Activated naive CD4-positive, alpha-beta T cell treated with anti-CD3 and anti-CD28 coated beads for 36 hours (primary cell): ENCODE measurements at regions of chr18 and their contacts with region 1.

Region 1: DNA sequence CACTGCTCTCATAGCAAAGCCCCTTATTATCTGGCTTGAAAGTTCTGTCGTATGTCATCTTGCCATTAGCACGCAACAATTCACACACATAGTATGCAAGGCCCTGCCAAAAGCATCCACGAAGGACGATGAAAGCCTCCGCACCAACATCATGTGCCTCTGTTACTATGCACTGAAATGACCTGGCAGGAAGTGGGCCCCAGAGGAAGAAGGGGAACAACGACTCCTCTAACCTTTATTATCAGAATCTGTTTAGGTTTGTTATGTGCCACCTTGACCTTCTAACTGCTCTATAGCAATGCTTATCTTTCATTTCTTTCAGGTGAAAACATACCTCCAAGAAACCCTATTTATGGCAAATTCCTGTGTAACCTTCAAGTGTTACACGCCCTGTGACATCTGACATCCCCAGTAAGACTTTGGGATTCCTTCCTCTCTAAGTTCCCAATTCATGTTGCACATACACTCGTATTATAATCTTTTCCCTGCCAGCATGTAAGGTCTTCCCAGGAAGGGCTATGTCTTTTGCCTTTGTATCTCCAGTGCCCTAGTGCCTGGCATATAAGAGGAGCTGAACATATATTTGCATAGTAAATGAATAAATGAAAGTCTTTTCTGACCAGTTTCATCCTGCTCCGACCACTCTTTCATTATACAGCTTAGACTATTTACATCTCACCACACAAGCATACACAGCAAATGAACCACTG is 7.0 kb upstream of the NDUFV2 start:
- DNase-seq: peak; percentile 88
- H3K4me3 Mint-ChIP-seq: peak overlapping the region; percentile 57
- H3K27ac Mint-ChIP-seq: peak overlapping the region; percentile 96
- H3K4me1 Mint-ChIP-seq: peaks cover 63% of the 10 kb centered on the region
- H3K27me3 Mint-ChIP-seq: no peaks in the 10 kb centered on the region

Region 2: DNA sequence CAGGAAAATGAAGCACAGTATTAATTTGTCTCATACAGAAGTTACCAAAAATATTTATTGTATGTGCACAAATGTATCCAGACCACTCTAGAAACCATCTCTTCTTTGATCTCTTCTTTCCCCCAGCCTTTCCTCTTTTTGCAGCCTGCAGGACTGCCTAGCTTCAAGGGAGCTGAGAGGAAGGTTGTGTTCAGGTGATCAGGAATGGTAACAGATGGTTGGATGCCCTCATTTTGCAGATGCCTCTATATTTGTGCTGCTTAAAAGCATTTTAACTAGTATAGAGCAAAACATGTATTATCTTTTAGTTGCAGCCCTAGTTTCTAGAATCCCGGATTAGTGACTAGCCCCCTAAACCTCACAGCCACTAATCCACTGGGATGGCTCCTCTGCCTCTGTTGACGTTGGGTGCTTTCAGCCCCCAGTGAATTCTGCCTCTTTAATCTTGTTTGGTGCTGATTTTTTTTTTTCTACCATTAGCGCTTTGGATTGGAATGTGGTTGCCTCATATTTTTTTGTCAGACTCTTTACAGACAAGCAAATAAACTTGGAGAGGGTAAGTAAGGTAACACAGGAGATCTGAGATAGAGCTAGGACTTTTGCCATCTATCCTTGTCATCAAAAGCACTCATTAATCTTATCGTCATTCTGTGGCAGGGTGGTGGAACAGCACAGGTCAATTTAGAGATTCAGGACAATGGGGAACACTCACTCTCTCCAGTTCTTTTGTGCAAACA is 96.8 kb before region 1 on chr18:
- CTCF ChIA-PET with region 1: no interaction called
- intact Hi-C with region 1: no loop called
- DNase-seq: no peak
- H3K4me3 Mint-ChIP-seq: no peak overlapping the region
- H3K27ac Mint-ChIP-seq: no peak overlapping the region
- H3K4me1 Mint-ChIP-seq: no peaks in the 10 kb centered on the region
- H3K27me3 Mint-ChIP-seq: peaks cover 16% of the 10 kb centered on the region

Region 3: DNA sequence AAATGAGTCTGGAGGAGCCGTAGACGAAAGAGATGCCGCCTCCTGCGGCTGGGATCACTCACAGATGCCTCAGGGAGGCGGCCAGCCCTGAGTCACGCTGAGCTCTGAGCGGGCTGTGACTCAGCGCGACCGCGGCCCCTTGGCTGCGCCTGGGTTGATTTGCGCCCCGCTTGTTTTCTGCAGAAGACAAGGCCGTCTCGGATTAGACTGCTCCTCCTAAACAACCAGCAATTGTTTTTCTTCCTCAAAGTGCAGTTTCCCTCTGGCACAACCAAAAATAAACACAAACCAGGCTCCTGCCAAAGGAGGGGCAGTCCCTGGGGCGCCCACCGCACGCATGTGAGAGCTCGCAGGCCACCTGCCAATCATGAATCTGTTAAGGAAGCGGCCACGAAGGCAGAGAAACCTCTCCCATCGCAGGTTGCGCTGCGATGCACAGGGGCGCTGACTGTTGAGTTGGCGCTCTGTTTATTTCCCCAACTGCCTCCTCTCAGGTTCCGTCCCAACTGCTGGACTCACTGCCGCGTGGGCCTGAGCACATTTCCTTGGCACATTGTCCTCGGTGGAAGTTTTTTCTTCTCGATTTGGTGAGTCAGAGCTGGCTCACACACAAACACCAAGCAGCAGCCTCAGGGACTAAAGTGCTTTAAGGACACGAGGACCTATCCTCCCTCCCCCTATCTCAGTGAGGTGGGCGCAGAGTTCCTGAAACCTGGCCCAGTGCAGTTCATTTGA is 78.1 kb before region 1 on chr18:
- CTCF ChIA-PET with region 1: no interaction called
- intact Hi-C with region 1: no loop called
- DNase-seq: peak; percentile 84
- H3K4me3 Mint-ChIP-seq: peak overlapping the region; percentile 56
- H3K27ac Mint-ChIP-seq: no peak overlapping the region
- H3K4me1 Mint-ChIP-seq: peaks cover 14% of the 10 kb centered on the region
- H3K27me3 Mint-ChIP-seq: peaks cover 8% of the 10 kb centered on the region

Region 4: GRCh38 chr18:9082711-9083510 is 12.5 kb before region 1 on chr18:
- CTCF ChIA-PET with region 1: interaction called, 12 read pairs
- intact Hi-C with region 1: loop called (anchors 1 kb)
- DNase-seq: peak; percentile 82
- H3K4me3 Mint-ChIP-seq: peak overlapping the region; percentile 67
- H3K27ac Mint-ChIP-seq: peak overlapping the region; percentile 92
- H3K4me1 Mint-ChIP-seq: peaks cover 30% of the 10 kb centered on the region
- H3K27me3 Mint-ChIP-seq: no peaks in the 10 kb centered on the region

Region 5: GRCh38 chr18:9117980-9118841 is 22.8 kb after region 1 on chr18:
- CTCF ChIA-PET with region 1: interaction called, 3 read pairs
- intact Hi-C with region 1: loop called (anchors 1 kb)
- DNase-seq: no peak
- H3K4me3 Mint-ChIP-seq: peak overlapping the region; percentile 57
- H3K27ac Mint-ChIP-seq: peak overlapping the region; percentile 98
- H3K4me1 Mint-ChIP-seq: peaks cover 81% of the 10 kb centered on the region
- H3K27me3 Mint-ChIP-seq: no peaks in the 10 kb centered on the region